Mammary epithelial cell (primary cell): ENCODE measurements at regions of chr7 and their contacts with region 1.

Region 1: DNA sequence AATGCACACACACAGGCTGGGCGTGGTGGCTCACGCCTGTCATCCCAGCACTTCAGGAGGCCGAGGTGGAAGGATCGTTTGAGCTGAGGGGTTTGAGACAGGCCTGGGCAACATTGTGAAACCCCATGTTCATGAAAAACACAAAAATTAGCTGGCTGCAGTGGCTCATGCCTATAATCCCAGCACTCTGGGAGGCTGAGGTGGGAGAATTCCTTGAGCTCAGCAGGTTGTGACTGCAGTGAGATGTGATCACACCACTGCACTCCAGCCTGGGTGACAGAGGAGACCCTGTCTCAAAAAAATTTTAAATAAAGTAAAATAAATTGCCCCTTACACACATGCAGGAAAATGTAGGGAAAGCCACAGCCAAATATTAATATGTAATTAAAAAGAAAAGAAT is 44.1 kb downstream of the RNF32 start:
- DNase-seq: no peak
- H3K4me3 ChIP-seq: no peak overlapping the region
- H3K27ac ChIP-seq: no peak overlapping the region
- H3K4me1 ChIP-seq: no peaks in the 10 kb centered on the region
- H3K27me3 ChIP-seq: no peaks in the 10 kb centered on the region
- CTCF ChIP-seq: no peak

Region 2: GRCh38 chr7:156560075-156560474 is 124.6 kb before region 1 on chr7:
- CTCF ChIA-PET with region 1: no interaction called
- dilution Hi-C with region 1: no loop called
- in situ Hi-C with region 1: no loop called
- intact Hi-C with region 1: no loop called
- DNase-seq: no peak
- H3K4me3 ChIP-seq: no peak overlapping the region
- H3K27ac ChIP-seq: no peak overlapping the region
- H3K4me1 ChIP-seq: no peaks in the 10 kb centered on the region
- H3K27me3 ChIP-seq: no peaks in the 10 kb centered on the region
- CTCF ChIP-seq: no peak

Region 3: GRCh38 chr7:156702399-156702798 is 17.7 kb after region 1 on chr7:
- CTCF ChIA-PET with region 1: no interaction called
- dilution Hi-C with region 1: no loop called
- in situ Hi-C with region 1: no loop called
- intact Hi-C with region 1: loop called (anchors 1 kb)
- DNase-seq: no peak
- H3K4me3 ChIP-seq: no peak overlapping the region
- H3K27ac ChIP-seq: no peak overlapping the region
- H3K4me1 ChIP-seq: peaks cover 6% of the 10 kb centered on the region
- H3K27me3 ChIP-seq: no peaks in the 10 kb centered on the region
- CTCF ChIP-seq: no peak